ENCODE measurements at regions of chr6 and their contacts with region 1.

Region 1: DNA sequence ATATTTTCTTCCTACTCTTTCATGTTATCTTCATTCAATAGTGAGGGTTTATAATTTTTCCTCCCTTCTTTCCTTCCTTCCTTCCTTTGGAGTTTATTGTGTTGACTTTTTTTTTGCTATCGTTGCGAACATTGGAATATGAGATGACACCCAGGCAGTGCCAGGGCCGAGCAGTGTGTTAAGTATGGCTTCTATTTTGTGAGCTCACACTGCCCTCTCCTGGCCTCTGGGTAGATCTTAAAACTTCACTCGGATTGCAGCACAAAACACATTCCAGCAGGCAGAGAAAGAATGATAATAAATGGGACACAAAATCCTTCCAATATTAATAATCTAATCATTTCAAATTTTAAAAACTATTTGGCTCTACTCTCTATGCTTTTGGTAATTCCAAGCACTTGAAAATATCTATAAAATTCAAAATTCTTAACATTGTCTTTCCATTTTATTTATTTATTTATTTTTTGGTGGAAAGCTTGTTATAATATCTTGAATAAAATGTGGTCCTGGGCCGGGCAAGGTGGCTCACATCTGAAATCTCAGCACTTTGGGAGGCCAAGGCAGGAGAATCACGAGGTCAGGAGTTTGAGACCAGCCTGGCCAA is 147.4 kb upstream of the OLIG3 start:
- DNase-seq: peak in 4 of 5 donors; percentile 60 to 75 (median 66)
- ATAC-seq: peak; percentile 88 to 94 (median 91)
- H3K4me3 ChIP-seq: no peak overlapping the region
- H3K27ac ChIP-seq: no peak overlapping the region
- H3K4me1 ChIP-seq: peaks cover 0 to 9% (median 0%) of the 10 kb centered on the region in 12 donors
- H3K27me3 ChIP-seq: no peaks in the 10 kb centered on the region
- CTCF ChIP-seq: peak; percentile 47 to 79 (median 62)
- POLR2A ChIP-seq: no peak

Region 2: GRCh38 chr6:136967876-136968752 is 673.5 kb before region 1 on chr6:
- intact Hi-C with region 1: loop called in 5 of 10 experiments (anchors 5 to 10 kb)
- DNase-seq: peak; percentile 49 to 77 (median 65)
- ATAC-seq: peak in 3 of 4 donors; percentile 71 to 76 (median 74)
- H3K4me3 ChIP-seq: no peak overlapping the region
- H3K27ac ChIP-seq: peak overlapping the region in 6 of 12 donors; percentile 37 to 79 (median 59)
- H3K4me1 ChIP-seq: peaks cover 0 to 19% (median 2%) of the 10 kb centered on the region in 12 donors
- H3K27me3 ChIP-seq: peaks cover 0 to 5% (median 0%) of the 10 kb centered on the region in 9 donors
- CTCF ChIP-seq: peak; percentile 46 to 71 (median 60)
- POLR2A ChIP-seq: no peak

Region 3: DNA sequence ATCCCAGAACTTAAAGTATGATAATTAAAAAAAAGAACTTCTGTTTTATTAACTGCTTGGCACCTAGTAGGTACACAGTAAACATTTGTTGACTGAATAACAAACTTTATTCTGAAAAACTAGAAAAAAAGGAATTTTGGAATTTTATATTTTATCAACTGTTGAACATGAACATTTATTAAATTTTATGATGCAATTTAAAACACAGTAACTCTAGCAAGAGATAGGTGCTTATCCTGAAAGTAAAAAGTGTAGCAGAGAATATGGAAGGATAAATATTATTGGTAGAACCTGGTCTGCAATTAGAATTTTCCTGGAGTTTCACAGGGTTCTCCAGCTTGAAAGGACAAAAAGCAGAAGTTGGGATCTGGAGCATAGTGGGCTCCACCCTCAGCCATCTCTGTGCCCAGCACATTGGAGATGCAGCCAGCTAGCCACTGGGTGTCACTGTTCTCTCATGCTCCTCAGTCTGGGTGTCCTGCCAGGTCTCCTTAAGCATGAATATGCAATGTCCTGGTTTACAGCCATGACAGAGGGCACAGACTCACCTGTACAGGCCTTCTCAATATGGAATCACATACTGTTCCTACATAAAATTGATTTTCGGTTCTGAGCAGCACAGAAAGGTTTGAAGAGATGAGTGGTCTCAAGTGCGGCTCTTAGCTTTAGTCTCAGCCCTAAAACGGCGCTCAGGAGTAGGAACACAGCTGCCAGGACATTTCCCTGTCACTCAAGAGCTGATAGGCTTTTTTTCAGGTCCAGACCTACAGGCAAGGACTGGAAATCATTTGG is 565.1 kb before region 1 on chr6:
- intact Hi-C with region 1: loop called in 6 of 10 experiments (anchors 2 to 5 kb)
- DNase-seq: peak; percentile 64 to 80 (median 67)
- ATAC-seq: peak; percentile 95 to 100 (median 98)
- H3K4me3 ChIP-seq: no peak overlapping the region
- H3K27ac ChIP-seq: no peak overlapping the region
- H3K4me1 ChIP-seq: peaks cover 0 to 5% (median 0%) of the 10 kb centered on the region in 12 donors
- H3K27me3 ChIP-seq: no peaks in the 10 kb centered on the region
- CTCF ChIP-seq: peak; percentile 63 to 83 (median 72)
- POLR2A ChIP-seq: no peak

Region 4: DNA sequence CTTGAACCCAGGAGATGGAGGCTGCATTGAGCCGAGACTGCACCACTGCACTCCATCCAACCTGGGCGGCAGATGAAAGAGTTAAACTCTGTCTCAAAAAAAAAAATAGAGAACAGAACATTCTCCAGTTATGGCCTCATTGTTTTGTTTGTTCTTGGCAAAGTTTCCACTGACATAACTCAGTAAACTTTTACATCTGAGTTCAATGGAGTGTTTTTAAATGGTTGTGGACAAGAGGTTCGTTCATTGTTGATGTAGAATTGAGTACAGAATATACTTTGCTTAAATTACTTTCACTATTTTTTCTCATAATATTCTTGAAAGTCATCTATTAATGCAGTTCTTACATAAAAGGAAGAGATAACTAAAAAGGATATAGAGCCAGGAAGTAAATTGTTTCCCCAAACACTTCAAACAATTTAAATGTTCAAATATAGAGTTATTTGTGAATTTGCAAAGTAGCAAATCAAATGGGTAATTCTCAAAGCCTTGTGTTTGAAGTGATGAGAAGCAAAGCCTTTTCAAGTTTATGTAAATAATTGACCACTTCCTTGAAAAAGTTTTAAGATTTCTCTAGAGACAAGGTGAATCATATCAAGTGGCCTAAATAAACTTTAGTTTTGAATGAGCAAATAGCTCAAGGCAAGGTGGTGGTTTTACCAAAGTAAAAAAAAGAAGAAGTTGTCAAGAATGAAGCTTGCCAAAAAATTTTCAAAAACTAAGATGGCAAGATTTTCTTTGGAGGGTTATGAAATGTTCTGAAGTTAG is 380.0 kb before region 1 on chr6:
- intact Hi-C with region 1: loop called in 1 of 10 experiments (anchors 5 kb)
- DNase-seq: no peak
- ATAC-seq: peak; percentile 36 to 71 (median 58)
- H3K4me3 ChIP-seq: no peak overlapping the region
- H3K27ac ChIP-seq: peak overlapping the region; percentile 32 to 72 (median 49)
- H3K4me1 ChIP-seq: peaks cover 0 to 31% (median 8%) of the 10 kb centered on the region in 12 donors
- H3K27me3 ChIP-seq: no peaks in the 10 kb centered on the region
- CTCF ChIP-seq: no peak
- POLR2A ChIP-seq: no peak

Region 5: DNA sequence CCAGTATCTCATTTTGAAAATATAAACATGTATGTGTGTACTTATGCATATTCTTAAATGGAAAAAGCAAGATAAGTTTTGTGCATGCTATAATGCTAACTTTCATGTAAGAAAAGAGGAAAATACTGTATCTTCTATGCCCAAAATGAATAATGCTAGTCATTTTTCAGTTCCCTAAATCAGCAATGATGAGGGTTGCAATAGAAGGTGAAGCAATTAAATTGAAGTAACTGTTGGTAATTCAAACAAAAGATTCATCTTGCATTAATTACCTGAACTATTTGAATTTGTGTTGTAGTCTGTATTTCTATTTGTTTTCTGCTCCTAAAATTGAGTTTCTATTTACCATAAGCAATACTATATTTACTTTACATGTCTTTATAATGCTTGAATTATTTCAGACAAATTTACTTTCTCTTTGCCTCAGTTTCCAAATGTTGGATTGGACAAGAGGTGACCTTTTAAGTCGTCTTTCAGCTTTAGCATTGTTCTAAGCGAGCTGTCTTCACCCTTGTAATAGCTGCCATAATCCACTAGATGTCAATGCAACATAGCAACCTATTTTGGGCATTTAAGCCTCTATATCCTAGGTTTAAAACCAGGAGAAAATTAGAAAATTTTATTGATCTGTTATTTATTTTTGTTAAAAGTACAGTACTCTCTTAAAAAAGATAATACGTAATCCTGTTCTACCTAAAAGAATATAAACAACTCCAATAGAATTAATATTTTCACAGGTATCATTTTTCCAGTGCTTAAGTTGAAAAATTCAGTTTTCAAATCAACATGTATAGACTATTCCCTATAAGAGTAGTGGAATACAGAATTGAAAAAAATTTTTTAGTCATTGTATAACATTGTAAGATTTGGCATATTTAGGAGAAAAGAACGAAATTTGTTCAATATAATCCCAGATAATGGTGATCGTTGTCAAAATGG is 370.1 kb before region 1 on chr6:
- intact Hi-C with region 1: loop called (anchors 1 to 10 kb)
- DNase-seq: no peak
- ATAC-seq: peak in 3 of 4 donors; percentile 57 to 85 (median 73)
- H3K4me3 ChIP-seq: no peak overlapping the region
- H3K27ac ChIP-seq: no peak overlapping the region
- H3K4me1 ChIP-seq: peaks cover 0 to 14% (median 0%) of the 10 kb centered on the region in 12 donors
- H3K27me3 ChIP-seq: no peaks in the 10 kb centered on the region
- CTCF ChIP-seq: peak; percentile 78 to 96 (median 92)
- POLR2A ChIP-seq: no peak

Region 6: DNA sequence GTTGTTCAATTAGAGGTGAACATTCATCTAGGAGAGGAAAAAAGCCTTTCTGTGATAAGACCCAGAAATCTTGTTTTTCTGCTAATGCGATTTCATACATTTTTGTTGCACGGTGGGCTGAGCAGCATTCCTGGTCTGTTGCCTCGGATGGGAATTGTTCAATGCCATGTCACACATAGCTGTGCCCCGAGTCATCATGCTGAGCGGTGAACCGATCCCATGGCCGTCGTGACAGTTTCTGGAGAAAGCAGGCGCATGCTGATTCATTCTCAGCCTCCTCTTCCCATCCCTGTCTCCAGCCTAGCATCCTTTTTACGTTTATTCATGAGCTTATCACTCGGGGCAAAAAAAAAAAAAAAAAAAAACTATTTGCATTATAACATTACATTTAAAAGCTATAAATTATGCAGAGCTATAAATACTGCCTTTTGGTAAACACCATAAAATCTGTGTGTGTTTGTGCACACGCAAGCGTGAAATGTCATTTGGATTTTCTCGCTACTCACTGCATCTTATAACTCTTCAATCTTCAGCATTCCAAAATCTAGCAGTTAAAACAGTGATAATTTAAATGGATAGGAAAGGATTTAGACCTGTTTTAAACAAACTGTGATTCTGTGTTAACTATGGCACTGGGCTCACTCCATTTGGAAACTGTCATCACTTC is 363.5 kb before region 1 on chr6:
- intact Hi-C with region 1: loop called in 7 of 10 experiments (anchors 2 to 10 kb)
- DNase-seq: no peak
- ATAC-seq: no peak
- H3K4me3 ChIP-seq: no peak overlapping the region
- H3K27ac ChIP-seq: no peak overlapping the region
- H3K4me1 ChIP-seq: peaks cover 0 to 3% (median 0%) of the 10 kb centered on the region in 12 donors
- H3K27me3 ChIP-seq: no peaks in the 10 kb centered on the region
- CTCF ChIP-seq: no peak
- POLR2A ChIP-seq: no peak

Region 7: DNA sequence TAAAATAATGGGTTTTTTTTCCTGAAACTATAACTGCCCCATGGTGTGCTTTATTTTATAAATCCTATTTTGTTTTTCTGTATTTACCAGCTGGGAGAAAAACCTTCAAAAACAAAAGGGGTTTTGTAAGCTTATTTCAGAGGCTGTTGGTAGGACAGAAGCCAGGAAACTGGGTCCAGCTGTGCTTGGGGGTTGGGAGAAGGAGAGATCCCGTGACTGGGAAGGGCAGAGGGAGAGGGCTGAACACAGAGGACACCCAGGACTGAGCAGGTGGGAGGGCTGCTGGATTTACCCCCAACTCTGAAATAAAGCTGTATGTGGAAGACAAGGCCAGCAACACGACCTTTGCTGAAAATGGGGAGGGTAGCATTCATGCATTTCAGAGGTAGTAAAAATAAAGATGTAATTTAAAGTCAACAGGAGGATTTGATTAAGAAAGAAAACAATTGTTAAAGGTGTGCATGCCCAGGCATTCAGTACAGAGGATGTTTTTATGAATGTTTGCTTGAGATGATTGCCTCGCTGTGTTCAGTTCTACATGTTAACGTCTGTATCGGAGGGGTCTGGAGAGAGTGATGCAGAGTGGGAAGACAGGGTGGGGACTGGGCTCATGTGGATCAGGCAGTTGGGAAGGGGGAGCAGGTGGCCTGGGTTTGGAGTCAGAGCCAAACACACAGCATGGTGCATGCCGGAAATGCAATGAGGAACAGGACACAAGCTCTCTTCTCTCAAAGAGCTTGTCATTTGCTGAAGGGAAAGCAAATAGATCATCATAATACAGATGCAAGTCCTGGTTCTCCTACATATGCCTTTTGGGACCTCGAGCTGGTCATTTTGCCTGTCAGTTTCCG is 541.6 kb after region 1 on chr6:
- intact Hi-C with region 1: no loop called
- DNase-seq: peak in 2 of 5 donors; percentile 20 to 24
- ATAC-seq: peak in 1 of 4 donors; percentile 54
- H3K4me3 ChIP-seq: no peak overlapping the region
- H3K27ac ChIP-seq: no peak overlapping the region
- H3K4me1 ChIP-seq: peaks cover 0 to 8% (median 0%) of the 10 kb centered on the region in 12 donors
- H3K27me3 ChIP-seq: no peaks in the 10 kb centered on the region
- CTCF ChIP-seq: no peak
- POLR2A ChIP-seq: no peak